CD8-positive, alpha-beta T cell (primary cell): ENCODE measurements at regions of chr9 and their contacts with region 1.

Region 1: DNA sequence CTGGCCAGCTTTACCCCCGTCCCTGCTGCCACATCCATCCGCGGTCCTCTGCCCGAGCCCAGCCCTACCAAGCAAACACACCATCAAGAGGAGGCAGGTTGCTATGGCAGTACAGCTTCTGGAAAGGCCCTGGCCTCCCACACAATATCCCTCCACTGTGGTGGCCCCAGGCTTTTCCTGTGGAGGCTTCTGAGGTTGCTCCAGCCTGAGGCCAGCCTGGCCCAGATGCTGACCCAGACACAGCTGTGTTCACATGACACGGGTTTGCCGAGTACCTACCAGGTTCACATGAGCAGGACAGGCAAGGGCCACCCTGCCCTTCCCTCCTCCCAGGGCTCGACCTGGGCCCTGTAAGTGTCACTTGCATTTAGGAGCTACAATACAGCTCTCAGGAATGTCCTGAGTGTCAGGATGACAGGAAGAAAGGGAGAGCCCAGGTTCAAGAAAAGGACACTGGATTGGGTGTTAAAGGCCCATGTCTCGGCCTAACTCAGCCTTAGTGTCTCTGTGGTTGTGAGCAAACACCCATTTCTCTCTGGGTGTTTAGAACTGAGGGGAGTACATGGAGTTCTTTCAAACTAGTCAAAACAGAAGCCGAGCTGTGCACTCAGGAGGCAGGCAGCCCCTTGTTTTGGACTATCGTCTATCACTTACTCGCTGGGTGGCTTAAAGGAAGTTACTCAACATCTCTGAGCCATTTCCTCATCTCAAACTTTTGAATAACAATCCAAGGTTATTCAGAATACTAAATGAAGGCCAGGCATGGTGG is 40.2 kb downstream of the NAIF1 start:
- DNase-seq: peak in 7 of 9 experiments; percentile 30 to 85 (median 71)
- ATAC-seq: peak; percentile 21
- H3K4me3 ChIP-seq: peak overlapping the region; percentile 7 to 28
- H3K4me3 Mint-ChIP-seq: peak overlapping the region; percentile 76
- H3K27ac ChIP-seq: peak overlapping the region; percentile 76 to 98
- H3K27ac Mint-ChIP-seq: peak overlapping the region; percentile 99
- H3K4me1 ChIP-seq: peaks cover 86% of the 10 kb centered on the region
- H3K4me1 Mint-ChIP-seq: peaks cover 86% of the 10 kb centered on the region
- H3K27me3 ChIP-seq: no peaks in the 10 kb centered on the region
- H3K27me3 Mint-ChIP-seq: no peaks in the 10 kb centered on the region
- CTCF ChIP-seq: no peak

Region 2: GRCh38 chr9:127734747-127735529 is 292.0 kb before region 1 on chr9 and contains the start of gene TOR2A:
- CTCF ChIA-PET with region 1: no interaction called
- POLR2A ChIA-PET with region 1: no interaction called
- intact Hi-C with region 1: no loop called
- DNase-seq: peak; percentile 98 to 100 (median 99)
- ATAC-seq: peak; percentile 94
- H3K4me3 ChIP-seq: peak within 1 kb of the TSS; percentile 67 to 79
- H3K4me3 Mint-ChIP-seq: peak within 1 kb of the TSS; percentile 91
- H3K27ac ChIP-seq: peak within 1 kb of the TSS; percentile 59 to 87
- H3K27ac Mint-ChIP-seq: peak within 1 kb of the TSS; percentile 86
- H3K4me1 ChIP-seq: peaks cover 18% of the 10 kb centered on the region
- H3K4me1 Mint-ChIP-seq: peaks cover 7% of the 10 kb centered on the region
- H3K27me3 ChIP-seq: no peaks in the 10 kb centered on the region
- H3K27me3 Mint-ChIP-seq: no peaks in the 10 kb centered on the region
- CTCF ChIP-seq: peak; percentile 80
- total RNA-seq, gene TOR2A: 4.7 to 5.3 TPM

Region 3: DNA sequence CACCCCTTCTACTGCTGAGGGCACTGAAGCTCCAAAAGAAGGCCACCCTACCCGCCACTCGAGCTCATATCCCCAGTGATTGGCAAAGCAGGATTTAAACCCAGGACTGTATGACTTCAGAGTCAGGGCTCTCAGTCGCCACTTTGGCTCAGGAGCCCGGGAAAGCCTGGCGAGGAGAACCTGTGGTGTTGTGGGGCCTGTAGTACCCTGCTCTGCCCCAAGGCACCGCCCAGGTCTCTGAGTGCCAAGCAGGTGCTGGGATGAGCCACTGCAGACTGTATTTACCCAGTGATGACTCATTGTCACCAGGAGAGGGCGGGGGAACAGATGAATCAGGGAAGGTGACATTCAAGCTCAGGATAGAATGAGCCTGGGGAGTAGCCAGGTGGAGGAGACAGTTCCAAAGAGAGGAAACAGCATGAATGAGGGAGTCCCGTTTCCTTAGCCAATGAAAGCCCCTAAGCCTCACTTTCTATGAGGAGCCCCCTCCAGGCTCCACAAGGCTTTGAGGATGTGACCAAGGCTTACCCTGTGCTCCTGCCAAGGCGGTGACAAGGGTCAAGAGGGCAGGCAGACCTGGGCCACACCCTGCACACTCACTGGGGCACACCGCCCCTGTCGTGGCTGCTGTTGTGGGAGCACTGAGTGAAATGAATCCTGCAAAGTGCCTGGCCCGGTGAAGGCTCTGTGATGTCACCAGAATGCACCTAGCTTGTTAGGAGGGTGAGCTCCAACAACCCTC is 71.5 kb before region 1 on chr9:
- CTCF ChIA-PET with region 1: interaction called, 678 read pairs
- POLR2A ChIA-PET with region 1: interaction called, 20 read pairs
- intact Hi-C with region 1: no loop called
- DNase-seq: peak; percentile 41 to 89 (median 82)
- ATAC-seq: peak; percentile 87
- H3K4me3 ChIP-seq: peak overlapping the region; percentile 4 to 21
- H3K4me3 Mint-ChIP-seq: peak overlapping the region; percentile 68
- H3K27ac ChIP-seq: peak overlapping the region; percentile 3 to 17
- H3K27ac Mint-ChIP-seq: peak overlapping the region; percentile 91
- H3K4me1 ChIP-seq: peaks cover 97% of the 10 kb centered on the region
- H3K4me1 Mint-ChIP-seq: peaks cover 85% of the 10 kb centered on the region
- H3K27me3 ChIP-seq: no peaks in the 10 kb centered on the region
- H3K27me3 Mint-ChIP-seq: no peaks in the 10 kb centered on the region
- CTCF ChIP-seq: peak; percentile 77

Region 4: GRCh38 chr9:127970401-127971313 is 56.3 kb before region 1 on chr9:
- CTCF ChIA-PET with region 1: interaction called, 214 read pairs
- POLR2A ChIA-PET with region 1: interaction called, 467 read pairs
- intact Hi-C with region 1: loop called (anchors 1 to 2 kb)
- DNase-seq: peak; percentile 38 to 86 (median 75)
- ATAC-seq: peak; percentile 60
- H3K4me3 ChIP-seq: peak overlapping the region; percentile 32 to 73
- H3K4me3 Mint-ChIP-seq: peak overlapping the region; percentile 88
- H3K27ac ChIP-seq: peak overlapping the region; percentile 67 to 76
- H3K27ac Mint-ChIP-seq: peak overlapping the region; percentile 99
- H3K4me1 ChIP-seq: peaks cover 96% of the 10 kb centered on the region
- H3K4me1 Mint-ChIP-seq: peaks cover 98% of the 10 kb centered on the region
- H3K27me3 ChIP-seq: no peaks in the 10 kb centered on the region
- H3K27me3 Mint-ChIP-seq: no peaks in the 10 kb centered on the region
- CTCF ChIP-seq: no peak

Region 5: GRCh38 chr9:128007566-128008138 is 19.3 kb before region 1 on chr9:
- CTCF ChIA-PET with region 1: interaction called, 6 read pairs
- POLR2A ChIA-PET with region 1: interaction called, 73 read pairs
- intact Hi-C with region 1: loop called (anchors 1 kb)
- DNase-seq: peak; percentile 82 to 98 (median 92)
- ATAC-seq: peak; percentile 88
- H3K4me3 ChIP-seq: peak overlapping the region in 1 of 2 experiments; percentile 46
- H3K4me3 Mint-ChIP-seq: peak overlapping the region; percentile 73
- H3K27ac ChIP-seq: peak overlapping the region; percentile 63 to 68
- H3K27ac Mint-ChIP-seq: peak overlapping the region; percentile 96
- H3K4me1 ChIP-seq: peaks cover 76% of the 10 kb centered on the region
- H3K4me1 Mint-ChIP-seq: peaks cover 75% of the 10 kb centered on the region
- H3K27me3 ChIP-seq: no peaks in the 10 kb centered on the region
- H3K27me3 Mint-ChIP-seq: no peaks in the 10 kb centered on the region
- CTCF ChIP-seq: no peak

Region 6: GRCh38 chr9:128420060-128420650 is 393.2 kb after region 1 on chr9:
- CTCF ChIA-PET with region 1: no interaction called
- POLR2A ChIA-PET with region 1: no interaction called
- intact Hi-C with region 1: no loop called
- DNase-seq: peak; percentile 24 to 84 (median 66)
- ATAC-seq: peak; percentile 76
- H3K4me3 ChIP-seq: peak overlapping the region; percentile 55 to 61
- H3K4me3 Mint-ChIP-seq: peak overlapping the region; percentile 78
- H3K27ac ChIP-seq: no peak overlapping the region
- H3K27ac Mint-ChIP-seq: no peak overlapping the region
- H3K4me1 ChIP-seq: peaks cover 14% of the 10 kb centered on the region
- H3K4me1 Mint-ChIP-seq: peaks cover 11% of the 10 kb centered on the region
- H3K27me3 ChIP-seq: peaks cover 0 to 10% of the 10 kb centered on the region in 2 experiments
- H3K27me3 Mint-ChIP-seq: peaks cover 23% of the 10 kb centered on the region
- CTCF ChIP-seq: peak; percentile 75

Region 7: DNA sequence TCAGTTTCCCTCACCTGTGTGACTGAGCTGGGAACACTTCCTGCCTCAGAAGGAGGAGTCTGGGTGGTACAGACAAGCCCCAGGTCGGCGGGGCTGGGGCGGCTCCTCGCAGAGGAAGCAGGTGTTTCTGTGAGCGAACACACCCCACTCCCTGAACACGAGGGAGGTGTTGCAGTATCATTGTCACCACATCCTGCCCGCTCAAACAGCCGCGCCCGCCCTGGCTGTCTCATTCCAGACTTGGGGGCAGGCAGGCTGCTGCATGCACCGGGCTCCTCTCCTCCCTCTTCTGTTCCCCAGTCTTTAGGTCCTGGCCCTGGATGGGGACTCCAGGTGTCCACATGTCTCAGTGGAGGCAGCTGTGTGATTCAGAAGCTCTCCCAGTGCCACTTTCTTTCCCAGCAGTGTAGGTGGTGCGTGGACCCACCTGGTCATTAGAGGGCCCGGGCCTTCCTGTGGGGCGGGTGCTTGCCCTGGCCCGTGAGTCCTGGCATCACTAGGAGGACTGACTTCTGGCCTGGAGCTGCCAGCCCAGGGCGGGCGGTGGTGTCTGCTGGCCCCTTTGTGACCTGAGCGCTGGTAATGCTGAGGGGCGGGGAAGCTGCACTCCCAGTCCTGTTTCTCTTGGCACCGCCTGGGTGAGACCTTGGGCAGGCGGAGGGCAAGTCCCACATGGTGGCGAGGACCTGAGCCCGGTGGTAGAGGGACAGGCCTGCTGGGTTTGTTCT is 875.6 kb after region 1 on chr9:
- CTCF ChIA-PET with region 1: no interaction called
- POLR2A ChIA-PET with region 1: no interaction called
- intact Hi-C with region 1: loop called in 1 of 2 experiments (anchors 10 kb)
- DNase-seq: peak; percentile 71 to 95 (median 90)
- ATAC-seq: peak; percentile 93
- H3K4me3 ChIP-seq: peak overlapping the region; percentile 32 to 56
- H3K4me3 Mint-ChIP-seq: peak overlapping the region; percentile 81
- H3K27ac ChIP-seq: peak overlapping the region; percentile 87 to 92
- H3K27ac Mint-ChIP-seq: peak overlapping the region; percentile 91
- H3K4me1 ChIP-seq: peaks cover 69% of the 10 kb centered on the region
- H3K4me1 Mint-ChIP-seq: peaks cover 69% of the 10 kb centered on the region
- H3K27me3 ChIP-seq: no peaks in the 10 kb centered on the region
- H3K27me3 Mint-ChIP-seq: no peaks in the 10 kb centered on the region
- CTCF ChIP-seq: no peak